Psoas muscle (tissue), 8 donors: ENCODE measurements at regions of chr6 and their contacts with region 1.

Region 1: DNA sequence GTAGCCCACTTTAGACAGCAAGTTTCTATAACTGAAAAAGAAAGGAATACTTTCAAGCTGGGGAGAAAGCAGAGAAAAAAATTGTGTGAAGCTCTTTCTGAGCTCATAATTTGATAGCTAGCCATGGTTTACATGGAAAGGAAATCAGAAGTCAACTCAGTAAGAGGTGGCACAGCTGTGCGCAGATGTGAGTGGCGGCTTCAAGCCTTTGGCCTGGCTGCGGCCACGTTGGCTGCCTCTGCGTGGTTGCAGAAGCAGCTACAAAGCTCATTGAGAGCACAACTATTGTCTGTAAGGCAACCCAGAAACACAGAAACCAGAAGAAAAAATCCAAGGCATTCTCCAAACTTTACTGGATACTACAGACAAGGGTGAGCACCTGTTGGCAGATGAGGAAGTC is 136.9 kb downstream of the SASH1 start:
- DNase-seq: no peak
- ATAC-seq: no peak
- H3K4me3 ChIP-seq: no peak overlapping the region
- H3K27ac ChIP-seq: no peak overlapping the region
- H3K4me1 ChIP-seq: no peaks in the 10 kb centered on the region
- H3K27me3 ChIP-seq: no peaks in the 10 kb centered on the region
- CTCF ChIP-seq: no peak

Region 2: DNA sequence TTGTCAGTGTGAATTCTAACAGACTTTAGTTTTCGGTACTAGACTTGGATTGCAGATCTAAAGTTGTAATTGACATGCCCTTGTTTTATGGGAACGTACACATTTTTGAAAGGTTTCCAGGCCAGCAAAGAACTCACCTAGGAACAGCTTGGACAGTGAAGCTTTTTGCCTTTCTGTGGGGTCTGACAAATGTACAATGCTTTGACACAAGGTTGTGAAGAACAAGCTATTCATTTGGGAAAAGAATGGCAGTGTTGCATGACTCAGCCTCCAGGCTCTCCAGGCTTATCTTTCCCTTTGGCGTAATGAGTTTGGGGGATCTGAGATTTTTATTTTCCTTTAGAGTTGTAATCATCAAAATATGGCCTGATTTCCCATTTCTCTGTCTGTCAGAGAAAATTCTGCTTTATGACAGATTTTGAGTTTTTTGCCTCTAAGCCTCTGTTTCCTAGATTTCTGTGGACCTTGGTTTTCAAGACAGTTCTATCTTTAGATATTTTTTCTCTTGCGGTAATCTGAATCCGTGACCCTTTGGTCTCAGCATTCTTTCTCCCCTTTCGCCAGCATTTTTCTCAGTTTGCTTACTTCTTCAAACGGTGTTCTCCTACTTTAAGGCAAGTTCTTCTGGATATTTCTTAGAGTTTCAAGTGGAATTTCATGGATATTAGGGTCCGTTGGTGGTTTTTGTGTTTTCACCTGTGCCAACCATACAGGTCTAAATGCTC is 1659.7 kb before region 1 on chr6:
- intact Hi-C with region 1: loop called in 1 of 2 experiments (anchors 5 kb)
- DNase-seq: no peak
- ATAC-seq: no peak
- H3K4me3 ChIP-seq: no peak overlapping the region
- H3K27ac ChIP-seq: no peak overlapping the region
- H3K4me1 ChIP-seq: no peaks in the 10 kb centered on the region
- H3K27me3 ChIP-seq: no peaks in the 10 kb centered on the region
- CTCF ChIP-seq: no peak

Region 3: GRCh38 chr6:148530394-148530953 is 51.0 kb after region 1 on chr6:
- intact Hi-C with region 1: no loop called
- DNase-seq: no peak
- ATAC-seq: peak in 1 of 4 donors; percentile 48
- H3K4me3 ChIP-seq: peak overlapping the region; percentile 28
- H3K27ac ChIP-seq: peak overlapping the region; percentile 34
- H3K4me1 ChIP-seq: no peaks in the 10 kb centered on the region
- H3K27me3 ChIP-seq: peaks cover 0 to 2% (median 0%) of the 10 kb centered on the region in 3 donors
- CTCF ChIP-seq: no peak